ENCODE measurements at regions of chr22 and their contacts with region 1.

Region 1: DNA sequence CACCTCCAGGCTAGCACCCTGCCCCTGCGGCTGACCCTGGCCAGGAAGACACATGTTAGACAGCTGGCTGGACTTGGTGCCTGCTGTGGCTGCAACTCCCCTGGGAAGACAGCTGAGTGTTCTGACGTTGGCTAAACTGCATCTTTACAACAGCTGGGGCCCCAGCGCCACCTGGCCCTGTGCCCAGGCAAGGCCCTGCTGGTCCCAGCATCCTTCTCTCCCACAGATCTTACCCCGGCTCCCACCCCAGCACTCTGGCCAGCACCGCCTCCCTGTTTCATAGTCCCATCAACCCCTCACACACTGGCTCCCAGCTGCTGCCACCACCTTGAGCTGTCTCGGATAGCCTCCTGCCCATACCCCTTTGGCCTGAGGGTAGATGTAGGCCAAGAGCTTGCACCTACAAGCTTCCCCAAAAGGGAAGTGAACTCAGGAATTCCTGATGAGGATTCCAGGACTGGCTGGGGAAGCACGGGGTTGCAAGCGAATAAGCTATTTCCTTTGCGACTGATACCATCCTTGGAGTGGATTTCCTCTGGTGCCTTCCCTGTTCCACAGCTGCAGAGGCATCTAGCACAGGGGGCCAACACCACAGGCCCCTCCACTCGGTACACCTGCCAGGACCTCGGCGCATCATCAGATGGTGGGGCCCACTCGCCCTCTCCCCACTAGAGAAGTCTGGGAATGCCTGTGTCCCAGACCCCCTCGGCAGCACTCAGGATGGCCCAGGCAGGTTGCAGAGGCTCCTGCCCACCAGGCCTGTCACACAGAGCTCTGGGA is 28.5 kb downstream of the RSPH14 start:
- DNase-seq: peak; percentile 18 to 41
- ATAC-seq: peak in 4 of 8 donors; percentile 26 to 50 (median 45)
- H3K4me3 ChIP-seq: no peak overlapping the region
- H3K27ac ChIP-seq: no peak overlapping the region
- H3K4me1 ChIP-seq: peaks cover 0 to 43% (median 17%) of the 10 kb centered on the region in 9 donors
- H3K27me3 ChIP-seq: peaks cover 0 to 5% (median 0%) of the 10 kb centered on the region in 7 donors
- CTCF ChIP-seq: no peak

Region 2: GRCh38 chr22:22976033-22976922 is 137.0 kb before region 1 on chr22:
- intact Hi-C with region 1: loop called in 1 of 10 experiments (anchors 5 kb)
- DNase-seq: no peak
- ATAC-seq: no peak
- H3K4me3 ChIP-seq: no peak overlapping the region
- H3K27ac ChIP-seq: no peak overlapping the region
- H3K4me1 ChIP-seq: no peaks in the 10 kb centered on the region
- H3K27me3 ChIP-seq: no peaks in the 10 kb centered on the region
- CTCF ChIP-seq: peak in 4 of 9 donors; percentile 1 to 22 (median 18)

Region 3: GRCh38 chr22:23075525-23076216 is 37.6 kb before region 1 on chr22:
- intact Hi-C with region 1: no loop called
- DNase-seq: no peak
- ATAC-seq: no peak
- H3K4me3 ChIP-seq: no peak overlapping the region
- H3K27ac ChIP-seq: no peak overlapping the region
- H3K4me1 ChIP-seq: peaks cover 0 to 24% (median 6%) of the 10 kb centered on the region in 9 donors
- H3K27me3 ChIP-seq: peaks cover 0 to 19% (median 0%) of the 10 kb centered on the region in 7 donors
- CTCF ChIP-seq: no peak

Measured in heart right ventricle (tissue), 16 donors.